ENCODE measurements at regions of chr5 and their contacts with region 1.

Region 1: DNA sequence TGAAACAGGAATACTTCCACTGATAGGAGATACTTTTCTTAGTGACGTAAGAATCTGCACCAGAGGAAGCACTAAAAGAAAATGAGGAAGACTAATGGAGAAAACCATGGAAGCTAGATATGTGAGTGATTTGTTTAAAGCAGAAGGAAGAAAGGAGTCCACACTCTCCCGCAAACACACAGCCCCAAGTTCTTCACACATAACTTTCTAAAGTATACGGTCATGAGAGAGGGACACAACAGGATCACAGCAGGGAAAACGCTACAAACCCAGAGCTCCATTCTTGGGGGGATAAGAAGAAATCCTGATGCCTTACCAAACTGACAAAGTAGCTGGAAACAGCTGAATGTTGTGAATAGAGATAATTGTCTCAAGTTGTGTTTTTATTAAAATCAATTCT is 222.2 kb upstream of the TMEM161B start:
- DNase-seq: no peak
- ATAC-seq: no peak
- H3K4me3 ChIP-seq: no peak overlapping the region
- H3K27ac ChIP-seq: no peak overlapping the region
- H3K4me1 ChIP-seq: no peaks in the 10 kb centered on the region
- H3K27me3 ChIP-seq: no peaks in the 10 kb centered on the region
- CTCF ChIP-seq: no peak

Region 2: DNA sequence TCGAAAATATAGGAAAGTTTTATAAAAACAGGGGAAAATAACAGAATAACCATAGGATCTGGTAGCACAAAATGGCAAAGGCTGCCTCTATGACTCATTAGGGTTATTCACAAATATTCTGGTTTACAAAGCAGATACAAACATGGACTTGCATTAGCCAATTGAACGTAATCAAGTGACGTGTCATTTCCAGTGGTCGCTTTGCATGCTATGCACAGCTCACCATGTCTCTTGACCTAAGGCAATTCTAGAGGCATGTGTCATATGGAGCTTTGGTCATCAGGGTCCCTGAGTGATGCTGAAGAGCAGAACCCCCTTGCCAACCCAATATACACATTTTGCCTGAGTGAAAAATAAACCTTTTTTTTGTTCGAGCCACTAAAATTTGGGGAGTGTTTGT is 381.1 kb before region 1 on chr5:
- intact Hi-C with region 1: loop called in 1 of 2 experiments (anchors 10 kb)
- DNase-seq: no peak
- ATAC-seq: no peak
- H3K4me3 ChIP-seq: no peak overlapping the region
- H3K27ac ChIP-seq: no peak overlapping the region
- H3K4me1 ChIP-seq: no peaks in the 10 kb centered on the region
- H3K27me3 ChIP-seq: no peaks in the 10 kb centered on the region
- CTCF ChIP-seq: no peak

Region 3: GRCh38 chr5:88539693-88540365 is 49.0 kb after region 1 on chr5:
- intact Hi-C with region 1: no loop called
- DNase-seq: no peak
- ATAC-seq: no peak
- H3K4me3 ChIP-seq: no peak overlapping the region
- H3K27ac ChIP-seq: no peak overlapping the region
- H3K4me1 ChIP-seq: no peaks in the 10 kb centered on the region
- H3K27me3 ChIP-seq: peaks cover 0 to 3% (median 0%) of the 10 kb centered on the region in 3 donors
- CTCF ChIP-seq: no peak